Endothelial cell of umbilical vein (primary cell): ENCODE measurements at regions of chr15 and their contacts with region 1.

Region 1: DNA sequence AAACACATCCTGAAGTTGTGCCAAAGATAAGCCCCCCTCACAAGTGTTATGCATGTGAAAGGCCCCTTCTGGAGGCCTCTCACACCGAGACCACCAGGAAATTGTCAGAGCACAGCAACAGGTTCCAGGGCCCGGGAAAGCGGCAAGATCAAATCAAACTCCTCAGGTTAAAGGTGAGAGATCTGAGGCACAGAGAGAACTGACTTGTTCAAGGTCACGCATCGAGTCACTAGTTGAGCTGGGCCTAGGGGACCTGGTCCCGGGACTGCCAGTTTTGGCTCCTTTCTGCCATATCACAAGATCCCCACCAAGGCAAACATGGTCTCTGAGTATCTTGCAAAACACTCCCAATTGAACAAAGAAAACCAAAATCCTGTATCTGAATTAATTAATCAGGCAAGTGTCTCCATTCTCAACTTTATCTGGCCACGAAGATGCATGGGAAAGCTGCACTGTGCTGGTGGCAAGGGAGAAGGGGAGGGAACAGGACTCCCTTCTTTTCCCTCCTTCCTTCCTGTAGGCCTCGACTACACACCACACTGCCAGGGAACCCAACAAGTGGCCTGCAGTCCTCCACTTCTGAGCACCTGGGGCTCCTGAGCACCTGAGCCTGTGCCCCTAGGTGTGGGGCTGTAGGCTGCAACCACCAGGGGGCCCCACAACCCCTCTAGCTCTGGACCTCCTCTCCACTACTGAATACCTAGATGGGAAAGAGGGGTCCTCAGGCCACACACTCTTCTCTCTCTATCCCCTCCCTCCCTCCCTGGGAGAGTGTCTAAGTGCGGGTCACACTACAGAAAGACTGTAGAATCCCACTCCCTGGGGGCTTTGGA is 37.3 kb downstream of the ANP32A start:
- DNase-seq: peak; percentile 32
- H3K4me3 ChIP-seq: no peak overlapping the region
- H3K27ac ChIP-seq: no peak overlapping the region
- H3K4me1 ChIP-seq: peaks cover 14% of the 10 kb centered on the region
- H3K27me3 ChIP-seq: no peaks in the 10 kb centered on the region
- CTCF ChIP-seq: peak; percentile 39 to 73
- POLR2A ChIP-seq: no peak

Region 2: GRCh38 chr15:68730471-68730919 is 52.9 kb before region 1 on chr15:
- CTCF ChIA-PET with region 1: interaction called, 3 read pairs
- POLR2A ChIA-PET with region 1: no interaction called
- dilution Hi-C with region 1: no loop called
- intact Hi-C with region 1: loop called (anchors 1 kb)
- DNase-seq: peak; percentile 76
- H3K4me3 ChIP-seq: no peak overlapping the region
- H3K27ac ChIP-seq: no peak overlapping the region
- H3K4me1 ChIP-seq: peaks cover 2% of the 10 kb centered on the region
- H3K27me3 ChIP-seq: peaks cover 9 to 11% of the 10 kb centered on the region in 2 experiments
- CTCF ChIP-seq: peak; percentile 35 to 64
- POLR2A ChIP-seq: no peak

Region 3: GRCh38 chr15:68765602-68766368 is 17.7 kb before region 1 on chr15:
- CTCF ChIA-PET with region 1: interaction called, 3 read pairs
- POLR2A ChIA-PET with region 1: no interaction called
- dilution Hi-C with region 1: no loop called
- intact Hi-C with region 1: loop called (anchors 1 kb)
- DNase-seq: peak; percentile 80
- H3K4me3 ChIP-seq: no peak overlapping the region
- H3K27ac ChIP-seq: peak overlapping the region; percentile 35
- H3K4me1 ChIP-seq: peaks cover 52% of the 10 kb centered on the region
- H3K27me3 ChIP-seq: no peaks in the 10 kb centered on the region
- CTCF ChIP-seq: no peak
- POLR2A ChIP-seq: no peak

Region 4: DNA sequence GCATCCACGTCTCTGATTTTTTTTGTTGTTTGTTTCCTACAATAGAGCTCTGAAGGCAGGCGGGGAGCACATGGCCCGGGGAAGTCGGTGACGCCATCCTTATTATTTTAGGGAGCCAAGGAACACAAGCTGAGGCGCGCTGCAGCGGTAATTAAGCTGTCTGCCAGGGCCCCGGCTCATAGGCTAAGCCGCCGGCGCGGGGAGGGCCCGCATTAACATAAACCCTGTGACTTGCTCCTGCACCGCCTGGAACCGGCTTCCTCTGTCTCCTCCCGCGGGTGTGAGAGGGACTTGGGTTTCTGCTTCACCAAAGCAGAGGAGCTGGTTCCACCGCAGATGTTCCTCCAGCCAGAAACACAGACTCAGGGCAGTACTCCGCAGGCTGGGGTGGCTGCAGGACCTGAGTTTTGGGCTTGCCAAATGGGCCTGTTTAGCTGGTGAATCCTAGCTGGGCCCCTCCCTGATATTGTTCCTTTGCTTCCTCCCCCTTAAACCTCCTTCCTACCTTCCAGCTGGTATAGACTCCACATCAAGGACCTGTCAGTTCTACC is 11.9 kb after region 1 on chr15:
- CTCF ChIA-PET with region 1: interaction called, 24 read pairs
- POLR2A ChIA-PET with region 1: no interaction called
- dilution Hi-C with region 1: no loop called
- intact Hi-C with region 1: loop called (anchors 1 kb)
- DNase-seq: peak; percentile 93
- H3K4me3 ChIP-seq: no peak overlapping the region
- H3K27ac ChIP-seq: peak overlapping the region; percentile 58
- H3K4me1 ChIP-seq: peaks cover 27% of the 10 kb centered on the region
- H3K27me3 ChIP-seq: no peaks in the 10 kb centered on the region
- CTCF ChIP-seq: no peak
- POLR2A ChIP-seq: no peak

Region 5: GRCh38 chr15:68829068-68829467 is 45.6 kb after region 1 on chr15:
- CTCF ChIA-PET with region 1: interaction called, 15 read pairs
- POLR2A ChIA-PET with region 1: no interaction called
- dilution Hi-C with region 1: no loop called
- intact Hi-C with region 1: loop called (anchors 2 kb)
- DNase-seq: peak; percentile 81
- H3K4me3 ChIP-seq: no peak overlapping the region
- H3K27ac ChIP-seq: no peak overlapping the region
- H3K4me1 ChIP-seq: no peaks in the 10 kb centered on the region
- H3K27me3 ChIP-seq: peaks cover 13 to 19% of the 10 kb centered on the region in 2 experiments
- CTCF ChIP-seq: peak; percentile 29 to 57
- POLR2A ChIP-seq: no peak

Region 6: GRCh38 chr15:68862415-68862814 is 79.0 kb after region 1 on chr15:
- CTCF ChIA-PET with region 1: no interaction called
- POLR2A ChIA-PET with region 1: no interaction called
- dilution Hi-C with region 1: no loop called
- intact Hi-C with region 1: no loop called
- DNase-seq: no peak
- H3K4me3 ChIP-seq: no peak overlapping the region
- H3K27ac ChIP-seq: no peak overlapping the region
- H3K4me1 ChIP-seq: no peaks in the 10 kb centered on the region
- H3K27me3 ChIP-seq: peaks cover 12 to 13% of the 10 kb centered on the region in 2 experiments
- CTCF ChIP-seq: no peak
- POLR2A ChIP-seq: no peak